ENCODE measurements at regions of chr2 and their contacts with region 1.

Region 1: GRCh38 chr2:88451811-88452565 is 505 bp downstream of the FOXI3 start:
- DNase-seq: peak in 1 of 2 experiments; percentile 76
- H3K4me3 ChIP-seq: peak overlapping the region; percentile 65 to 96 (median 77)
- H3K27ac ChIP-seq: no peak overlapping the region
- H3K4me1 ChIP-seq: peaks cover 0 to 4% (median 2%) of the 10 kb centered on the region in 4 experiments; a peak in 4 of 7 replicates
- H3K27me3 ChIP-seq: peaks cover 0 to 21% (median 9%) of the 10 kb centered on the region in 4 experiments; a peak in 6 of 7 replicates
- CTCF ChIP-seq: no peak
- EP300 ChIP-seq: no peak
- POLR2A ChIP-seq: no peak
- RAD21 ChIP-seq: no peak

Region 2: GRCh38 chr2:88167740-88168139 is 284.2 kb before region 1 on chr2:
- CTCF ChIA-PET with region 1: no interaction called
- POLR2A ChIA-PET with region 1: no interaction called
- DNase-seq: no peak
- H3K4me3 ChIP-seq: no peak overlapping the region
- H3K27ac ChIP-seq: no peak overlapping the region
- H3K4me1 ChIP-seq: peaks cover 0 to 3% (median 1%) of the 10 kb centered on the region in 4 experiments; a peak in 3 of 7 replicates
- H3K27me3 ChIP-seq: 0 out of 7 replicates have a peak, but pooled peaks cover 0 to 2% (median 0%) of the 10 kb centered on the region in 4 experiments
- CTCF ChIP-seq: no peak
- EP300 ChIP-seq: no peak
- POLR2A ChIP-seq: no peak
- RAD21 ChIP-seq: no peak

Region 3: GRCh38 chr2:88199912-88200682 is 251.9 kb before region 1 on chr2:
- CTCF ChIA-PET with region 1: interaction called, 17 read pairs
- POLR2A ChIA-PET with region 1: no interaction called
- DNase-seq: peak in 1 of 2 experiments; percentile 73
- H3K4me3 ChIP-seq: peak overlapping the region in 3 of 4 experiments; percentile 25 to 37 (median 26); a peak in 6 of 8 replicates
- H3K27ac ChIP-seq: no peak overlapping the region
- H3K4me1 ChIP-seq: peaks cover 3 to 16% (median 8%) of the 10 kb centered on the region in 4 experiments; a peak in 6 of 7 replicates
- H3K27me3 ChIP-seq: peaks cover 1 to 12% (median 8%) of the 10 kb centered on the region in 4 experiments
- CTCF ChIP-seq: 0 out of 4 replicates have a peak, but pooled peaks of 1 of the 3 experiments have one; percentile 2
- EP300 ChIP-seq: no peak
- POLR2A ChIP-seq: no peak
- RAD21 ChIP-seq: no peak

Region 4: DNA sequence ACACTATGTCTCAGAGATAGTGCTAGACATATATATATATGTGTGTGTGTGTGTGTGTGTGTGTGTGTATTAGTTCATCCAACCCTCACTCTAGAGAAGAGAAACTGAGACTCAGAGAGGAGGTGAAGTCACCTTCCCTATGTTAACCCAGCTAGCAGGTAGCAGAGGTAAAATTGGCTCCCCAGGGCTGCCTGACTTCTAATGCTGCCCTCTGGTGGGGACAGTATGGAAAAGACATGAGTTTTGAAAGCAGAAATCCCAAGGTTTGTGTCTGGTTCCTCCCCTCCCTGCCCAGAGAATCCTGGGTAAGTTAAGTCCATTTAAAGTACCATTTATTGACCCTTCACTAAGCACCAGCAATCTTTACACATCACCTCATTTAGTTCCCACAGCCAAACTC is 144.2 kb before region 1 on chr2:
- CTCF ChIA-PET with region 1: interaction called, 11 read pairs
- POLR2A ChIA-PET with region 1: no interaction called
- DNase-seq: peak in 1 of 2 experiments; percentile 13
- H3K4me3 ChIP-seq: no peak overlapping the region
- H3K27ac ChIP-seq: no peak overlapping the region
- H3K4me1 ChIP-seq: no peaks in the 10 kb centered on the region
- H3K27me3 ChIP-seq: no peaks in the 10 kb centered on the region
- CTCF ChIP-seq: peak; percentile 40 to 76 (median 76)
- EP300 ChIP-seq: no peak
- POLR2A ChIP-seq: no peak
- RAD21 ChIP-seq: peak; percentile 67 to 78

Region 5: DNA sequence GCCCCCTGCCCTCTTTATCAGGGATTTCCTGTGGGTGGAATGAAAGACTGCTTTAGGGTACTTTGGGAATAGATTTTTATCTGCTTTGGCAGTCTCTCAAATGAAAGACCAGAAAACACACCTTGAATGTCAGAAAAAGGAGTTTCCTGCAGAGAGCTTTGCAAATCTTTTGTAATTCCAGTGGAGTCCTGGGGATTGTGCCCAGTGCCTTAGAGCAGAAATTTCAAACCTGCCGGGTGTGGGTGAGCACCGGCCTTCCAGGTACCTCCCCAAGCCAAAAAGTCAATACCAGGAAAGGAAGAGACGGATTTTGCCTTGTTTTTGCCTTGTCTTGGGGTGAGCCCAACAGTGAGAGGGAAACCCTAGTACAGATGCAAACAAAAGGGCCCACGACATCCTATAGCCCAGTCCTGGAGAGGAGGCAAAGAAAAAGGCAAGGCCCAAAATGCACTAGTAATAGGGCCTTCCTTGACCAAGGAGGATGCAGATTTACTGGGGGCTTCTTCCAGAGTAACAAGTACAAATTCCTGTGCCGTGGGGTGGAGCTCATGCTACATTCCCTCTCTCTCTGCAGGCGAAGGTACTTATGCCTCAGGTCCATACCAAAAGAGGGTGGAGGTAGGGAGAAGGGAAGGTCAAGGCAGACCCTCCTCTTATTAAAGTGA is 35.8 kb before region 1 on chr2:
- CTCF ChIA-PET with region 1: interaction called, 10 read pairs
- POLR2A ChIA-PET with region 1: interaction called, 7 read pairs
- DNase-seq: peak; percentile 43 to 64
- H3K4me3 ChIP-seq: peak overlapping the region in 2 of 4 experiments; percentile 11 to 29; a peak in 3 of 8 replicates
- H3K27ac ChIP-seq: peak overlapping the region; percentile 49; the same call in 1 of the 2 replicates
- H3K4me1 ChIP-seq: peaks cover 10 to 22% (median 16%) of the 10 kb centered on the region in 4 experiments; a peak in 6 of 7 replicates
- H3K27me3 ChIP-seq: no peaks in the 10 kb centered on the region
- CTCF ChIP-seq: no peak
- EP300 ChIP-seq: peak in 1 of 2 experiments; percentile 43; a peak in 1 of 3 replicates
- POLR2A ChIP-seq: no peak
- RAD21 ChIP-seq: peak in 1 of 2 experiments; percentile 13; a peak in 1 of 4 replicates

Region 6: GRCh38 chr2:88471083-88471942 is 19.3 kb after region 1 on chr2:
- CTCF ChIA-PET with region 1: interaction called, 26 read pairs
- POLR2A ChIA-PET with region 1: no interaction called
- DNase-seq: no peak
- H3K4me3 ChIP-seq: peak overlapping the region in 1 of 4 experiments; percentile 23; a peak in 4 of 8 replicates
- H3K27ac ChIP-seq: no peak overlapping the region
- H3K4me1 ChIP-seq: peaks cover 0 to 7% (median 5%) of the 10 kb centered on the region in 4 experiments; a peak in 4 of 7 replicates
- H3K27me3 ChIP-seq: no peaks in the 10 kb centered on the region
- CTCF ChIP-seq: no peak
- EP300 ChIP-seq: no peak
- POLR2A ChIP-seq: no peak
- RAD21 ChIP-seq: no peak